ENCODE measurements at regions of chr7 and their contacts with region 1.

Region 1: GRCh38 chr7:105149827-105150226 is 135.8 kb downstream of the KMT2E start:
- DNase-seq: no peak
- ATAC-seq: no peak
- H3K4me3 ChIP-seq: no peak overlapping the region
- H3K27ac ChIP-seq: no peak overlapping the region
- H3K4me1 ChIP-seq: peaks cover 0 to 23% (median 7%) of the 10 kb centered on the region in 12 donors
- H3K27me3 ChIP-seq: no peaks in the 10 kb centered on the region
- CTCF ChIP-seq: no peak
- POLR2A ChIP-seq: no peak

Region 2: GRCh38 chr7:105268511-105269392 is 118.9 kb after region 1 on chr7:
- intact Hi-C with region 1: loop called in 1 of 10 experiments (anchors 10 kb)
- DNase-seq: peak in 1 of 5 donors; percentile 15
- ATAC-seq: peak; percentile 89 to 94 (median 90)
- H3K4me3 ChIP-seq: peak overlapping the region; percentile 4 to 61 (median 48)
- H3K27ac ChIP-seq: peak overlapping the region in 11 of 12 donors; percentile 54 to 81 (median 77)
- H3K4me1 ChIP-seq: peaks cover 0 to 41% (median 22%) of the 10 kb centered on the region in 12 donors
- H3K27me3 ChIP-seq: no peaks in the 10 kb centered on the region
- CTCF ChIP-seq: no peak
- POLR2A ChIP-seq: no peak

Region 3: GRCh38 chr7:105336009-105336408 is 186.2 kb after region 1 on chr7:
- intact Hi-C with region 1: loop called in 9 of 10 experiments (anchors 5 to 10 kb)
- DNase-seq: no peak
- ATAC-seq: no peak
- H3K4me3 ChIP-seq: no peak overlapping the region
- H3K27ac ChIP-seq: no peak overlapping the region
- H3K4me1 ChIP-seq: peaks cover 0 to 14% (median 5%) of the 10 kb centered on the region in 12 donors
- H3K27me3 ChIP-seq: no peaks in the 10 kb centered on the region
- CTCF ChIP-seq: peak; percentile 12 to 60 (median 47)
- POLR2A ChIP-seq: no peak

Region 4: DNA sequence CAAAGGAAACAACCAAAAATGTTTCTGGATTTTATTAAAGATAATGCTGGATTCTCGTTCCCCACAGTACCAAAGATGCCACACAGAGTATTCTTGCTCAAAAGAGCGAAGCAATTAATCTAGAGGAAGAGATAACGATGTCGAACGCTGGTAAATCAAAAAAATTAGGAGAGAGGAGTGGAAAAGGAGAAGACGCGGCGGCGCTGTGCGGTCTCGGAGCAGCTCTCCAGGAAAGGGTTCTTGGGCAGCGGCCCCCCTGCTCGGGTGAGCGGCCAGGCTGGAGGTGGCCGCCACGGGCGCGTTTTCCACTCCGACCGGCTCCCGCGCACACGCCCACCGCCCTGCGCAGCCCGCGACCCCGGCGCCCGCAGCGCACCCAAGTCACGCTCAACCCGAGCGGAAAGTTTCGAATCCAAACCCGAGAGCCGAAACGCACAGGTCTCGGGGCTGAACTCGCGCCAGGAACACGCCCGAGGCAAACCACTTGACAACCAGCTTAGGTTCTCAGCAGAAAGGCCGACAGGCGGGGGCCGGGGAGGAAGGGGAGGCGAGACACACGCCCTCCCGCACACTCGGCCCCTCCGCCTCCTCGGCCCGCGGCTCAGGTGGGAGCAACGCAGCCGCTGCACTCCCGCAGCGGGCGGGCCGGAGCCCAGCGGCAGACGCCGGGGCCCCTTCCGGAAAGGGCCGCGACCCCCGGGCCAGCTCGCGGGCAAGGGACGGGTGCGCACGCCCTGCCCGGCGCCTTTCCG is 238.0 kb after region 1 on chr7:
- intact Hi-C with region 1: loop called in 1 of 10 experiments (anchors 10 kb)
- DNase-seq: peak; percentile 59 to 73 (median 61)
- ATAC-seq: peak in 3 of 4 donors; percentile 68 to 73 (median 68)
- H3K4me3 ChIP-seq: peak overlapping the region; percentile 80 to 99 (median 96)
- H3K27ac ChIP-seq: peak overlapping the region in 9 of 12 donors; percentile 35 to 88 (median 55)
- H3K4me1 ChIP-seq: peaks cover 0 to 21% (median 11%) of the 10 kb centered on the region in 12 donors
- H3K27me3 ChIP-seq: no peaks in the 10 kb centered on the region
- CTCF ChIP-seq: peak in 1 of 12 donors; percentile 23
- POLR2A ChIP-seq: no peak

Region 5: DNA sequence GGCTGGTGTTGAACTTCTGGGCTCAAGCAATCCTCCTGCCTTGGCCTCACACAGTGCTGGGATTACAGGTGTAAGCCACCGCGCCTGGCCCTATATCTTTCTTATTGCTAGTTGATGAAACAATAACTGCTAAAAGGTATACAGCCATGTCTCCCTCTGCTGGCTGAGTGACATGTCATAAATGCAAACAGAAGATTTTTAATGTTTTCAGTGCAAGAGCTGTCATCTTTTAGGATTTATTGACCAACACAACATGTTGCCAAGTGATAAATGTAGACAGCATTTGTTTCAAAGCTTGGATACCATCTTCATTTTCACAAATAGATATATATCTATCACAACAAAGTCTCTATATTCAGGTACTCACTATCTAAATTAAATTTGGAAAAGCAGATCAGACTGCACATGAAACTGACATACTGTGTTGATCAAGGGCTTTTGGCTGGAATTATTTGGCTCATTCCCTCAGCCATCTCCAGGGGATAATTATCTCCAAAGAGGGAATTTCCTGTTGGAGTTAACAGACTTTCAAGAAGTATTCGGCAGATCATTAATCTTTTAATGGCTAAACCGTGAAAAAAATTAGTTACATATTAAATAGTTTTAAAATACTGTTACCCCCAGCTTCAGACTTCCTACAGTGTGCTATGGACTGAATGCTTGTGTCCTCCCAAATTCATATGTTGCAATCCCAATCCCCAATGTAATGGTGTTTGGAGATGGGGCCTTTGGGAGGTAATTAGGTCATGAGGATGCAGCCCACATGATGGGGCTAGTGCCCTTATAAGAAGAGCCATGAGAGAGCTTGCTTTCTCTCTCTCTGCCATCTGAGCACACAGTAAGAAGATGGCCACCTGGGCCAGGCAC is 280.2 kb after region 1 on chr7:
- intact Hi-C with region 1: loop called in 7 of 10 experiments (anchors 2 to 10 kb)
- DNase-seq: peak in 4 of 5 donors; percentile 9 to 39 (median 26)
- ATAC-seq: peak in 2 of 4 donors; percentile 36 to 50
- H3K4me3 ChIP-seq: no peak overlapping the region
- H3K27ac ChIP-seq: no peak overlapping the region
- H3K4me1 ChIP-seq: peaks cover 0 to 9% (median 0%) of the 10 kb centered on the region in 12 donors
- H3K27me3 ChIP-seq: no peaks in the 10 kb centered on the region
- CTCF ChIP-seq: peak; percentile 30 to 64 (median 46)
- POLR2A ChIP-seq: no peak